Panc1 (cell line): ENCODE measurements at regions of chr11 and their contacts with region 1.

Region 1: GRCh38 chr11:45846974-45847910 is at the start of gene CRY2:
- DNase-seq: peak; percentile 79
- ATAC-seq: peak; percentile 98
- H3K4me3 ChIP-seq: peak within 1 kb of the TSS; percentile 78 to 92
- H3K27ac ChIP-seq: peak within 1 kb of the TSS; percentile 79
- H3K4me1 ChIP-seq: peaks cover 10% of the 10 kb centered on the region
- H3K27me3 ChIP-seq: peaks cover 7% of the 10 kb centered on the region; the same call in 1 of the 2 replicates
- CTCF ChIP-seq: no peak
- total RNA-seq, gene CRY2: 14.6 TPM

Region 2: DNA sequence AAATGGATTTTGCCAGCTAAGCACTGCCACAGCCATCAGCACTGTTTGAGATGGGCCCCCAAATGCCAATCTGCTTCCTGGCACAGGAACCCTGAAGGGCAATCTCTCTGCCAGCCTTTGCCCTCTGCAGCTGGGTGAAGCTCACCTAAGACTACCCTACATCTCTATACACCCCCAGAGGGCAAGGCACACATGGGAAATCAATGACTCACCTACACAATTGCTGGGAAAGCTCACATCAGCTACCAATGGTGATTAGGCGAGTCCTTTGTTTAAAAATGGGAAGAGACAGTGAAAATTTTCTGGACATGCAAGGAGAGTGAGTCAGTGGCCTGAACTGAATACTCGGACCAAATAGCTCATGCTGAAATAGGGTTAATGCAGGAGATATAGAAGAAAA is 713.4 kb before region 1 on chr11:
- CTCF ChIA-PET with region 1: no interaction called
- POLR2A ChIA-PET with region 1: interaction called, 10 read pairs
- in situ Hi-C with region 1: no loop called
- intact Hi-C with region 1: no loop called
- DNase-seq: no peak
- ATAC-seq: no peak
- H3K4me3 ChIP-seq: no peak overlapping the region
- H3K27ac ChIP-seq: no peak overlapping the region
- H3K4me1 ChIP-seq: no peaks in the 10 kb centered on the region
- H3K27me3 ChIP-seq: peaks cover 32% of the 10 kb centered on the region
- CTCF ChIP-seq: no peak

Region 3: GRCh38 chr11:45423475-45424120 is 423.6 kb before region 1 on chr11:
- CTCF ChIA-PET with region 1: no interaction called
- POLR2A ChIA-PET with region 1: no interaction called
- in situ Hi-C with region 1: no loop called
- intact Hi-C with region 1: no loop called
- DNase-seq: no peak
- ATAC-seq: no peak
- H3K4me3 ChIP-seq: no peak overlapping the region
- H3K27ac ChIP-seq: no peak overlapping the region
- H3K4me1 ChIP-seq: no peaks in the 10 kb centered on the region
- H3K27me3 ChIP-seq: peaks cover 16% of the 10 kb centered on the region
- CTCF ChIP-seq: no peak